Right cardiac atrium (tissue), 5 donors: ENCODE measurements at regions of chr14 and their contacts with region 1.

Region 1: GRCh38 chr14:105490572-105491366 is at the start of gene TEDC1:
- DNase-seq: peak; percentile 100
- ATAC-seq: peak; percentile 84 to 87
- H3K4me3 ChIP-seq: peak within 1 kb of the TSS; percentile 61
- H3K27ac ChIP-seq: peak within 1 kb of the TSS; percentile 72
- H3K4me1 ChIP-seq: peaks cover 5% of the 10 kb centered on the region
- H3K27me3 ChIP-seq: no peaks in the 10 kb centered on the region
- total RNA-seq, gene TEDC1: 5.2 to 6.9 (median 5.8) TPM

Region 2: GRCh38 chr14:104708606-104709268 is 782.0 kb before region 1 on chr14:
- intact Hi-C with region 1: no loop called
- DNase-seq: peak; percentile 67 to 90 (median 90)
- ATAC-seq: peak; percentile 45 to 64
- H3K4me3 ChIP-seq: no peak overlapping the region
- H3K27ac ChIP-seq: no peak overlapping the region
- H3K4me1 ChIP-seq: no peaks in the 10 kb centered on the region
- H3K27me3 ChIP-seq: no peaks in the 10 kb centered on the region

Region 3: DNA sequence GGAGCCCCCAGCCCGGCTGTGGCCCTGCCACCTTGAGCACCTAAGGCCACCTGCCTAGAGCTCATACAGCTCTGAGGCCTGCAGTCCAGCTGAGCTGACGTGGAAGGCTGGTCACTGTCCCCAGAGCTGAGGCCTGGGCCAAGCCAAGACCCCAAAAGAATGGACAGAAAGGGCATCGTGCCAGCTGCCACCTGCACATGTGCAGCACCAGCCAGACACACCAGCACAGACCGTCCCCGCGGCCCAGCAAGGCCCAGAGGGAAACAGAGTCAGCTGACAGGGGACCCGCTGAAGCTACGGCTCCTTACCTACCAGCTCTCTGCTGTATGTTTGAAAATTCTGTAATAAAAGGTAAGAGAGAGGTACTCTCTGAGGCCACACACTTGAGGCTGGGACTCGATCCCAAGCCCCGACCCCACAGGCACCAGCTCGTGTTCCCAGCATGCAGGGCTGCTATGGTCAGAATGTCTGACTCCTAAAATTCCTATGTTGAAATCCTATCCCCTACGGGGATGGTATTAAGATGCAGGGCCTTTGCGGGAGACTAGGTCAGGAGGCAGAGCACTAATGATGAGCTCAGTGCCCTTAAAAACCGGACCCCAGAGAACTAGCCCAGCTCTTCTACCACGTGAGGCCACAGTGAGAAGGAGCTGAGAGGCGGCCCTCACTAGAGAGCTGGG is 215.4 kb before region 1 on chr14:
- intact Hi-C with region 1: no loop called
- DNase-seq: peak in 2 of 3 donors; percentile 42 to 56
- ATAC-seq: peak; percentile 57 to 82
- H3K4me3 ChIP-seq: no peak overlapping the region
- H3K27ac ChIP-seq: no peak overlapping the region
- H3K4me1 ChIP-seq: no peaks in the 10 kb centered on the region
- H3K27me3 ChIP-seq: no peaks in the 10 kb centered on the region

Region 4: GRCh38 chr14:105369653-105370040 is 121.1 kb before region 1 on chr14:
- intact Hi-C with region 1: loop called (anchors 2 to 10 kb)
- DNase-seq: peak in 1 of 3 donors; percentile 61
- ATAC-seq: no peak
- H3K4me3 ChIP-seq: no peak overlapping the region
- H3K27ac ChIP-seq: no peak overlapping the region
- H3K4me1 ChIP-seq: no peaks in the 10 kb centered on the region
- H3K27me3 ChIP-seq: no peaks in the 10 kb centered on the region

Region 5: GRCh38 chr14:105414456-105415371 is 76.1 kb before region 1 on chr14:
- intact Hi-C with region 1: loop called in 1 of 4 experiments (anchors 5 kb)
- DNase-seq: peak; percentile 88 to 95 (median 94)
- ATAC-seq: peak; percentile 82 to 87
- H3K4me3 ChIP-seq: peak overlapping the region; percentile 62
- H3K27ac ChIP-seq: peak overlapping the region; percentile 32
- H3K4me1 ChIP-seq: peaks cover 5% of the 10 kb centered on the region
- H3K27me3 ChIP-seq: no peaks in the 10 kb centered on the region

Region 6: DNA sequence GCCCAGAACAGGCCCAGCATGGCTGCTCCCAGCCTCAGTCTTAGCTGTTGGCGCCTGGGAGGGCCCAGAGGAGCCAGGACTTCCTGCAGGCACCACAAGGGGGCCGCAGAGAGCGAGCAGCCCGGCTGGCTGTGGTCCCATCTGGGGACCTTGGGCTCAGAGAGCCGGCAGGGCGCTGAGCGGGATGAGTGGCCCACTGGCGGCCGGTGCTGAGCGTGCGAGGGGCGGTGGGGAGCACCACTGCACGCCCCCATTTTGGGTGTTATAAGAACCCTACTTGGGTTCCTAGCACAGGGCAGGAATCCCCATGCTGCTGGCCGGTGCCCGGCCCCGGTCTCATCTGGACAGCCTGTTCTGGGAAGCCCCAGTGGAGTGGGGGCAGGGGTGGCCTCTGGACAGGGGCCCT is 42.1 kb before region 1 on chr14:
- intact Hi-C with region 1: loop called in 1 of 4 experiments (anchors 5 kb)
- DNase-seq: peak; percentile 77 to 93 (median 93)
- ATAC-seq: peak; percentile 87 to 88
- H3K4me3 ChIP-seq: no peak overlapping the region
- H3K27ac ChIP-seq: no peak overlapping the region
- H3K4me1 ChIP-seq: no peaks in the 10 kb centered on the region
- H3K27me3 ChIP-seq: no peaks in the 10 kb centered on the region